ENCODE measurements at regions of chr6 and their contacts with region 1.

Region 1: GRCh38 chr6:39309942-39310531 is 4.2 kb downstream of the KCNK17 start:
- DNase-seq: peak; percentile 48
- ATAC-seq: peak; percentile 96
- H3K4me3 ChIP-seq: no peak overlapping the region
- H3K27ac ChIP-seq: no peak overlapping the region
- H3K4me1 ChIP-seq: no peaks in the 10 kb centered on the region
- H3K27me3 ChIP-seq: no peaks in the 10 kb centered on the region
- CTCF ChIP-seq: peak; percentile 84 to 89 (median 88)
- POLR2A ChIP-seq: no peak
- RAD21 ChIP-seq: peak; percentile 96

Region 2: DNA sequence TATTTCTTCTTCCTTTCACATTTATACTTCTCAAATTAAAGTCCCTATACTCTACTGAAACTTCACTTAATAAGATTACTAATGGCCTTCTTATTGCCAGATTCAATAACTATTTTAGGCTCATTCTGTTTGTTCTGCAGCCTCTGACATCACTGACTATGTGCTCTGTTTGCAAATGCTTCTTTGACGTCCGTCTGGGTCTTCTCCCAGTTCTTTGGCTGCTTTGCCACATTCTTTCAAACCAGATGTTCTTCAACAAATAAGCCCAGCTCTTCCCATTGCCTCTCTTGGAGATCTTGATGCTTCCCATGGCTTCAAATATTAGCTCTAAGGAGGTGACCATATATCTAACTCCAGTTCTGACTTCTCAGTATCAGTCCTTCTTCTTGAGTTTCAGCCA is 787.7 kb before region 1 on chr6:
- CTCF ChIA-PET with region 1: no interaction called
- POLR2A ChIA-PET with region 1: no interaction called
- RAD21 ChIA-PET with region 1: no interaction called
- intact Hi-C with region 1: no loop called
- DNase-seq: no peak
- ATAC-seq: no peak
- H3K4me3 ChIP-seq: no peak overlapping the region
- H3K27ac ChIP-seq: no peak overlapping the region
- H3K4me1 ChIP-seq: no peaks in the 10 kb centered on the region
- H3K27me3 ChIP-seq: no peaks in the 10 kb centered on the region
- CTCF ChIP-seq: no peak
- POLR2A ChIP-seq: no peak
- RAD21 ChIP-seq: no peak

Region 3: DNA sequence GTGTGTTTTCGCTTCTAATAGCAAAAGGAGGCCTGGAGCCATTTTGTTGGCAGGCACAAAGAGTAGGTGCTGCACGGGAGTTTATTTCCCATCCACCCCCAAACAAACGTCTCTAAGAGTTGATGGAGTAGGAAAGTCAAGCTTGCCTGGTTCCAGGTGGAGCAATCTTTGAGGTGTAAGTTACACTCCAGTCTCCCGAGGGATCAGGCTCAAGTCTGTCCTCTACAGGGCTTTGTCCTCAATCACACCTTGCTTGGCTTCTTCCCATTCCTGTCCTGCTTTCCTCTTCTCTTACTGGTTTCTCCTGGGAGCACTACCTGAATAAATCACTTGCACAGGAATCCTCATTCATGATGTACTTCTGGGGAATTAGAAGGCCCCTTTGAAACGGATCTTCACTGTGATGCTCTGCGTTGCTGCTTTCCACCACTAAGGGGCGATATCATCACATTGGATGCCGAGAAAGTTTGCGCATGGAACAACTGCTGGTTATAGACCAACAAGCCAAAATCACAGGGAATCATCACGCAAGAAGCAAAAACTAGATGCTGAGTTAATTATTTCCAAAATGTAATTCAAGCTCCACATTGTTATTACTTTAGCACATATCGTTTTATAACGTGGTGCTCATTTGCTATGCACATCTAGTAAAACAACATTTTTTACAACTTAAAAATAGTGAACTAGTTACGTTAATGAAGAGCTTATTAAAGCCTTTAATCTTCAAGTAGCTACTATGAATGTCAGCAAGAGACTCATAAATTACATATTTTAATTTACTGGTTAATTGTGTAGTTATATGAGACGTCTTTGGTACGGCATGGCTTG is 438.1 kb before region 1 on chr6:
- CTCF ChIA-PET with region 1: interaction called, 8 read pairs
- POLR2A ChIA-PET with region 1: no interaction called
- RAD21 ChIA-PET with region 1: no interaction called
- intact Hi-C with region 1: loop called (anchors 2 kb)
- DNase-seq: peak; percentile 32
- ATAC-seq: peak; percentile 92
- H3K4me3 ChIP-seq: no peak overlapping the region
- H3K27ac ChIP-seq: no peak overlapping the region
- H3K4me1 ChIP-seq: no peaks in the 10 kb centered on the region
- H3K27me3 ChIP-seq: peaks cover 42% of the 10 kb centered on the region
- CTCF ChIP-seq: peak; percentile 81 to 98 (median 95)
- POLR2A ChIP-seq: no peak
- RAD21 ChIP-seq: peak; percentile 84

Region 4: DNA sequence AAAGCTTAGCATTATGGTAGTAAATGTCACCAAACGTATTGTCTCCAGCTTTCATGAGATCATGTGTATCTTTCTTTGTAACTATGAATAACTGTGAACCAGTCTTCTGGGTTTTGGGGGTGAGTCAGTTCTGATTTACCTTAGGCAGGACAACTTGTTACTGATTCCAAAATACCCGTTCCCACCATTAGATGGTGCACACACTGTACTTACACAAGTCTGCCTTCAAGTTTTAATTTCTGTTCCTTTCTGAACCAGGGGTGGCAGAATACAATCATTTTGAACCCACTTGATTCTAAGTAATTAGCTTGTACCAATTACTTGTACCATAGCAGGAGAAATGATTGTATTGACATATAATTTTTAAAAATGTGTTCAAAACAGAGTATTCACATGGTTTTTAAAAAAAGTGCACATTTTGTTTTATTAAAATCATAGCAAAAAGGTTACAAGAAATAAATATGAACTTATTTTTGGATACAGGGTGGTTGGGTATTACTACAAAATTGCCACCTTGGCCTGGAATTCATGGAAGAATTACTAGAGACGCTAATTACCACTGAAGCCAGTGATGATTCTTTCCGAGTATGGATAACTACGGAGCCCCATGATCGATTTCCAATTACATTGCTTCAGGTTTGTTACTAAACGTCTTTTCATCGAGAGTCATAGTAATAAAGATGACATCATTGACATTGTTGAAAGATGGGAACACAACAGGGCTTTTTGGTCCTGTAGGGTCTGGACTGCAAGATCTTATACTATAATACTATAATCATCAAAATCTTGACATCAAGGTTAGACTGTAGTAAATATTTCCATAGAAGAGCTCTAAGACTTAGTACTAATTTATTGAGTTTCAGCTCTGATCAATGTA is 336.6 kb before region 1 on chr6:
- CTCF ChIA-PET with region 1: interaction called, 11 read pairs
- POLR2A ChIA-PET with region 1: no interaction called
- RAD21 ChIA-PET with region 1: no interaction called
- intact Hi-C with region 1: loop called (anchors 1 kb)
- DNase-seq: peak; percentile 72
- ATAC-seq: peak; percentile 96
- H3K4me3 ChIP-seq: no peak overlapping the region
- H3K27ac ChIP-seq: no peak overlapping the region
- H3K4me1 ChIP-seq: no peaks in the 10 kb centered on the region
- H3K27me3 ChIP-seq: peaks cover 70% of the 10 kb centered on the region
- CTCF ChIP-seq: peak; percentile 65 to 83 (median 77)
- POLR2A ChIP-seq: no peak
- RAD21 ChIP-seq: peak; percentile 67

Region 5: GRCh38 chr6:38997128-38997761 is 312.8 kb before region 1 on chr6:
- CTCF ChIA-PET with region 1: interaction called, 8 read pairs
- POLR2A ChIA-PET with region 1: no interaction called
- RAD21 ChIA-PET with region 1: no interaction called
- intact Hi-C with region 1: loop called (anchors 1 kb)
- DNase-seq: no peak
- ATAC-seq: peak; percentile 70
- H3K4me3 ChIP-seq: no peak overlapping the region
- H3K27ac ChIP-seq: no peak overlapping the region
- H3K4me1 ChIP-seq: no peaks in the 10 kb centered on the region
- H3K27me3 ChIP-seq: peaks cover 91% of the 10 kb centered on the region
- CTCF ChIP-seq: peak; percentile 35 to 73 (median 71); a peak in 5 of 6 replicates
- POLR2A ChIP-seq: no peak
- RAD21 ChIP-seq: peak; percentile 55

Region 6: GRCh38 chr6:39102071-39102820 is 207.8 kb before region 1 on chr6:
- CTCF ChIA-PET with region 1: no interaction called
- POLR2A ChIA-PET with region 1: no interaction called
- RAD21 ChIA-PET with region 1: no interaction called
- intact Hi-C with region 1: loop called (anchors 5 kb)
- DNase-seq: no peak
- ATAC-seq: peak; percentile 93
- H3K4me3 ChIP-seq: no peak overlapping the region
- H3K27ac ChIP-seq: no peak overlapping the region
- H3K4me1 ChIP-seq: no peaks in the 10 kb centered on the region
- H3K27me3 ChIP-seq: peaks cover 19% of the 10 kb centered on the region
- CTCF ChIP-seq: peak; percentile 27 to 53 (median 47); a peak in 5 of 6 replicates
- POLR2A ChIP-seq: no peak
- RAD21 ChIP-seq: peak; percentile 42

Region 7: GRCh38 chr6:39166189-39166911 is 143.7 kb before region 1 on chr6:
- CTCF ChIA-PET with region 1: interaction called, 123 read pairs
- POLR2A ChIA-PET with region 1: no interaction called
- RAD21 ChIA-PET with region 1: no interaction called
- intact Hi-C with region 1: loop called (anchors 2 kb)
- DNase-seq: peak; percentile 52
- ATAC-seq: peak; percentile 99
- H3K4me3 ChIP-seq: no peak overlapping the region
- H3K27ac ChIP-seq: no peak overlapping the region
- H3K4me1 ChIP-seq: no peaks in the 10 kb centered on the region
- H3K27me3 ChIP-seq: no peaks in the 10 kb centered on the region
- CTCF ChIP-seq: peak; percentile 79 to 95 (median 89)
- POLR2A ChIP-seq: no peak
- RAD21 ChIP-seq: peak; percentile 96

Region 8: DNA sequence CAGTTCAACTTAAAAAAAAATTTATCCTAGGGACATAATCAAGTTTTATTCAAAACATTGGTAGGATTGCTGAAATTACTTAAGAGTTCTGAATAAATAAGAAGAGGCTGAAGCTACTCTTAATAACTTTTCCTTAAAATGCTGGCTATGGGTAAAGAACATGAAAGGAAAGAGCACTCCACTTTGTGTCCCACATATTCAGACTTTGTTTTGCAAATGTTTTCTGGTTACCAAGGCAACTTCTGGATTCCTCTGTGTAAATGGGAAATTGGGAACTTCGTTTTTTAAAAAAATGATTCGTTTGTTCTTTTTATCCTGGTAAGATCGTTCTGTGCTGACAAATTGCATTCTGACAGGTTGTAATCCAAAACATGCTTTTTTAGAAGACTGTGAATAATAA is 300.2 kb after region 1 on chr6:
- CTCF ChIA-PET with region 1: no interaction called
- POLR2A ChIA-PET with region 1: no interaction called
- RAD21 ChIA-PET with region 1: no interaction called
- intact Hi-C with region 1: no loop called
- DNase-seq: no peak
- ATAC-seq: no peak
- H3K4me3 ChIP-seq: no peak overlapping the region
- H3K27ac ChIP-seq: no peak overlapping the region
- H3K4me1 ChIP-seq: no peaks in the 10 kb centered on the region
- H3K27me3 ChIP-seq: peaks cover 29% of the 10 kb centered on the region
- CTCF ChIP-seq: no peak
- POLR2A ChIP-seq: no peak
- RAD21 ChIP-seq: no peak